ENCODE measurements at regions of chr3 and their contacts with region 1.

Region 1: DNA sequence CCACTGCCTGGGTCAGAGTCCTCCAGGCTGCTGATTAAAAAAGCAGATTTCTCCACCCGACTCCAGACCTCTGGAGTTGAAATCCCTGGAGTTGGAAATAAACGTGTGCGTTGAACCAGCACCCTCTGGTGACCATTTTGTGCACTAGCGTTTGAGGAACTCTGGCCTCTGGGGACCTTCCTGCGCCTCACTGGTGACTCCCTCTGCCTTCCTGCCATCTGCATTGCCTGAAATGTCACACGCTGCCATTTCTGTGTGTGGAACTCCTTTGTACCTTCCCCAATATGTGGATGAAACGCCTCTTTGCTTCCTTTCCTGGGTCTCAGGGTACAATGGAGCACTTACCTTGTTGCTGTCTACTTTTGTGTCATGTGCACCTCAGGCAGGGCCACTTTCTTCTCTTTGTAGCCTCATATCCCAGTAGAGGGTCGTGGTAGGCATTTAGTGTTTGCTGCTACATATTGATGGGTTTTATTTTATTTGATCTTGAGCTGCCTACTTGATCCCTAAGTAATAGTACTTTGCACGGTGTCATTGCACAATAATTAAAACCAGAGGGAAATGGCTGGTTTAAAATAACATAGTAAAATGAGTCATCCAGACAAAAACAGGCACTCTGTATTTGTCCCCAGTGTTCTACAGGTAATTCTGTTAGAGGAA is 56.8 kb downstream of the GPR171 start:
- DNase-seq: peak; percentile 71
- H3K4me3 ChIP-seq: peak overlapping the region in 1 of 2 experiments; percentile 27; a peak in 2 of 4 replicates
- H3K27ac ChIP-seq: peak overlapping the region in 1 of 2 experiments; percentile 72; a peak in 2 of 4 replicates
- H3K4me1 ChIP-seq: peaks cover 8 to 16% of the 10 kb centered on the region in 2 experiments; a peak in 3 of 4 replicates
- H3K27me3 ChIP-seq: peaks cover 26% of the 10 kb centered on the region
- CTCF ChIP-seq: peak; percentile 87
- EP300 ChIP-seq: no peak
- RAD21 ChIP-seq: peak; percentile 95

Region 2: GRCh38 chr3:150925751-150926201 is 220.4 kb before region 1 on chr3:
- CTCF ChIA-PET with region 1: interaction called, 10 read pairs
- POLR2A ChIA-PET with region 1: no interaction called
- DNase-seq: peak; percentile 59
- H3K4me3 ChIP-seq: no peak overlapping the region
- H3K27ac ChIP-seq: no peak overlapping the region
- H3K4me1 ChIP-seq: no peaks in the 10 kb centered on the region; a peak in 1 of 4 replicates
- H3K27me3 ChIP-seq: peaks cover 12% of the 10 kb centered on the region; the same call in 1 of the 2 replicates
- CTCF ChIP-seq: peak; percentile 56
- EP300 ChIP-seq: no peak
- RAD21 ChIP-seq: peak; percentile 57

Region 3: GRCh38 chr3:151008699-151009098 is 137.5 kb before region 1 on chr3:
- CTCF ChIA-PET with region 1: interaction called, 11 read pairs
- POLR2A ChIA-PET with region 1: no interaction called
- DNase-seq: peak; percentile 8
- H3K4me3 ChIP-seq: no peak overlapping the region
- H3K27ac ChIP-seq: no peak overlapping the region
- H3K4me1 ChIP-seq: no peaks in the 10 kb centered on the region; a peak in 1 of 4 replicates
- H3K27me3 ChIP-seq: peaks cover 14% of the 10 kb centered on the region; the same call in 1 of the 2 replicates
- CTCF ChIP-seq: peak; percentile 56
- EP300 ChIP-seq: no peak
- RAD21 ChIP-seq: peak; percentile 57

Region 4: DNA sequence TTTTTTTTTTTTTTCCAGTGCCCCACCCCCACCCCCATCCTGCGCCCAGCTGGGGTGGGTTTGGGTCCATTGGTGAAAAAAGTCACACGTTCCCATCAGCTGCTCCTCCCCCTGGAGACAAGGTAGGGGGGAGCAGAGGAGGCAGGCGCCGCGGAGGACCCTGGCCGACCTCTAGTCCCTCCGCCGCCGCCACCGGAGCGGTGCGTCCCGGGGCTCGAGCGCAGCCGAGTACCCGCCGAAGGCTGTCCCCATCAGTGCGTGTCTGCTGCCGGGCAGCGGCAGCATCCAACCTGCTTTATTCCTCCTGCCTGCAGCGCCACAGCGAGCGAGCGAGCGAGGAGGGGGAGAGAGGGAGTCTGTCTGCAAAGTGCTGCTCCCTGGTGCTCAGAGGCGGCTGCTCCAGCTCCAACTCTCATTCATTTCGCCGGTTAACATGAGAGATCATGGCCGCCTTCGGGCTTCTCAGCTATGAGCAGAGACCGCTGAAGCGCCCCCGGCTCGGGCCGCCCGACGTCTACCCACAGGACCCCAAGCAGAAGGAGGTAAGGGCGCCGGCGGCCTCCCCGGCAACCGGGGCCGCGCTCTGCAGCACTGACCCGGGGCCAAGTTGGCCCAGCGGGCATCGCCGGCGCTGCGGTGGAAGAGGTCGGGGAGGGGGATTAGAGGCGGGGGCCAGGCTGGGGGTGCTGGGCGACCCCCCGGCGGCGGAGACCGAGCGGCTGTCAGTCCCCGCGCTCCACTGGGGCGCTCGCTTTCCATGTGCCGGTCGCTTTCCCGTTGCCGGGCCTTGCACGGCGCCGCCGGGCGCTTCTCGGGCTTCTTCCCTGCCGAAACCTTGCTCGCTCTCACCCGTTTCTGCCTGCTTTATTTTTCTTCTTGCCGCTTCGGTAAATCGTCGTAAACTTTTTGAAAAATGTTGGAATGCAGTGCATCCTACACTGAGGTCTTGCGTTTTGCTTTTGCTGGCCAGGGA is 59.4 kb before region 1 on chr3:
- CTCF ChIA-PET with region 1: interaction called, 12 read pairs
- POLR2A ChIA-PET with region 1: no interaction called
- DNase-seq: peak; percentile 89
- H3K4me3 ChIP-seq: peak overlapping the region; percentile 57 to 65
- H3K27ac ChIP-seq: no peak overlapping the region
- H3K4me1 ChIP-seq: peaks cover 0 to 5% of the 10 kb centered on the region in 2 experiments; a peak in 1 of 4 replicates
- H3K27me3 ChIP-seq: peaks cover 78% of the 10 kb centered on the region
- CTCF ChIP-seq: peak; percentile 57
- EP300 ChIP-seq: no peak
- RAD21 ChIP-seq: peak; percentile 35